ENCODE measurements at regions of chr1 and their contacts with region 1.

Region 1: GRCh38 chr1:202009326-202010179 is 834 bp upstream of the ELF3 start:
- DNase-seq: peak; percentile 84
- ATAC-seq: peak; percentile 71
- H3K4me3 ChIP-seq: peak overlapping the region; percentile 46 to 93 (median 55)
- H3K27ac ChIP-seq: peak overlapping the region; percentile 72
- H3K4me1 ChIP-seq: peaks cover 71% of the 10 kb centered on the region
- H3K27me3 ChIP-seq: no peaks in the 10 kb centered on the region; a peak in 1 of 5 replicates
- CTCF ChIP-seq: peak; percentile 92
- EP300 ChIP-seq: no peak
- POLR2A ChIP-seq: no peak
- RAD21 ChIP-seq: peak; percentile 92

Region 2: DNA sequence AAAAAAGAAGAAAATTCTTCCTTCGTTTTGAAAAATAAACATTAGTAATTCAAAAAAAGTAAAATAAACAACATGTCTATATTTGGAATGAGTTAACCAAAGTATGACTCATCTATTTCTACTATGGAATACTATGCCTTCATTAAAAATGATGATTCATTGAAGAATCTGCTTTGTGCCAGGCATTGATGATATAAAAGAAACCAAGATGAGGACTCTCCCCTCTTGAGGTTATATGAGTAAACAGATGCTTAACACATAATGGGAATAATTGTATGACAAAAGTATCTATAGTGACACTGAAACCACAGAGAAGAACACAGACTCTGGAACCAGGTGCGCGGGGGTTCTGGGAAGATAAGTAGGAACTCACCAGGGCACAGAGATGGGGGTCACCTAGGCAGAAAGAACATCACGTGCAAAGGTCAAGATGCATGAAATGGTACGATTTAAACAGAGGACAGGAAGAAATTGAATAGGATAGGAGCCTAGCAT is 19.7 kb after region 1 on chr1:
- CTCF ChIA-PET with region 1: no interaction called
- POLR2A ChIA-PET with region 1: interaction called, 92 read pairs
- in situ Hi-C with region 1: no loop called
- intact Hi-C with region 1: no loop called
- DNase-seq: no peak
- ATAC-seq: no peak
- H3K4me3 ChIP-seq: no peak overlapping the region
- H3K27ac ChIP-seq: no peak overlapping the region
- H3K4me1 ChIP-seq: peaks cover 42% of the 10 kb centered on the region
- H3K27me3 ChIP-seq: no peaks in the 10 kb centered on the region
- CTCF ChIP-seq: no peak
- EP300 ChIP-seq: no peak; a peak in 1 of 4 replicates
- POLR2A ChIP-seq: no peak
- RAD21 ChIP-seq: no peak

Region 3: DNA sequence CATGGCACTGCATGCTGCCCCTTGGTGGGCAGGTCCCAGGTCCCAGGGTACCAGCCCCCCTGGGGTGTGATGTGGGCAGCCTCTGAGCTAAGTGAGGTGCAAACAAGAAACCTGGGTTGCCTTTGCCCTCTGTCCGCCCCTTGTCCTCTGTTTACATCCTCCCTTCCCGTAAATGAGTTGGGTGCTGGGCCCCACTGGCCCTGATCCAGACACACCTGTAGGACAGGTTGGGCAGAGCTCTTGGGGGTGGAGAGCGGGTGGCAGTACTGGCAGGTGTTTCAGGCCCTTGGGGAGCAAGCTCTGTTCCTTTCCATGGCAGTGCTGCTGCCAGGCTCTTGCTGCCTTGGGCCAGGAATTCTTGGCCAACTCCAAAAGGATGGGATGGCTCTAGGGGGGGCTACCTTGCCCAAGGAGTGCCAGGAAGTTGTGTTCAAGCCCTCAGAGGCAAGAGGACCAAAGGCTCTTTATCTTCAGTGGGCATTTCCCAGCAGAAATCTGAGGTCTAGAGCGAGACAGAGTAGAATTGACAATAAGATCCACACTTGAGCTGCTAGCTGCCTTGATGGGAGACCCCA is 36.8 kb after region 1 on chr1:
- CTCF ChIA-PET with region 1: no interaction called
- POLR2A ChIA-PET with region 1: interaction called, 31 read pairs
- in situ Hi-C with region 1: no loop called
- intact Hi-C with region 1: loop called (anchors 1 kb)
- DNase-seq: no peak
- ATAC-seq: peak; percentile 11; the same call in 2 of the 3 replicates
- H3K4me3 ChIP-seq: peak overlapping the region in 1 of 3 experiments; percentile 49; a peak in 2 of 6 replicates
- H3K27ac ChIP-seq: no peak overlapping the region
- H3K4me1 ChIP-seq: peaks cover 80% of the 10 kb centered on the region
- H3K27me3 ChIP-seq: no peaks in the 10 kb centered on the region
- CTCF ChIP-seq: no peak
- EP300 ChIP-seq: peak in 1 of 2 experiments; percentile 68; a peak in 1 of 4 replicates
- POLR2A ChIP-seq: no peak
- RAD21 ChIP-seq: no peak

Region 4: GRCh38 chr1:202069662-202070061 is 60.1 kb after region 1 on chr1:
- CTCF ChIA-PET with region 1: no interaction called
- POLR2A ChIA-PET with region 1: interaction called, 24 read pairs
- in situ Hi-C with region 1: no loop called
- intact Hi-C with region 1: no loop called
- DNase-seq: peak; percentile 82
- ATAC-seq: peak; percentile 84
- H3K4me3 ChIP-seq: no peak overlapping the region
- H3K27ac ChIP-seq: no peak overlapping the region
- H3K4me1 ChIP-seq: peaks cover 35% of the 10 kb centered on the region
- H3K27me3 ChIP-seq: no peaks in the 10 kb centered on the region
- CTCF ChIP-seq: no peak
- EP300 ChIP-seq: peak in 1 of 2 experiments; percentile 13; a peak in 1 of 4 replicates
- POLR2A ChIP-seq: no peak
- RAD21 ChIP-seq: no peak

Region 5: DNA sequence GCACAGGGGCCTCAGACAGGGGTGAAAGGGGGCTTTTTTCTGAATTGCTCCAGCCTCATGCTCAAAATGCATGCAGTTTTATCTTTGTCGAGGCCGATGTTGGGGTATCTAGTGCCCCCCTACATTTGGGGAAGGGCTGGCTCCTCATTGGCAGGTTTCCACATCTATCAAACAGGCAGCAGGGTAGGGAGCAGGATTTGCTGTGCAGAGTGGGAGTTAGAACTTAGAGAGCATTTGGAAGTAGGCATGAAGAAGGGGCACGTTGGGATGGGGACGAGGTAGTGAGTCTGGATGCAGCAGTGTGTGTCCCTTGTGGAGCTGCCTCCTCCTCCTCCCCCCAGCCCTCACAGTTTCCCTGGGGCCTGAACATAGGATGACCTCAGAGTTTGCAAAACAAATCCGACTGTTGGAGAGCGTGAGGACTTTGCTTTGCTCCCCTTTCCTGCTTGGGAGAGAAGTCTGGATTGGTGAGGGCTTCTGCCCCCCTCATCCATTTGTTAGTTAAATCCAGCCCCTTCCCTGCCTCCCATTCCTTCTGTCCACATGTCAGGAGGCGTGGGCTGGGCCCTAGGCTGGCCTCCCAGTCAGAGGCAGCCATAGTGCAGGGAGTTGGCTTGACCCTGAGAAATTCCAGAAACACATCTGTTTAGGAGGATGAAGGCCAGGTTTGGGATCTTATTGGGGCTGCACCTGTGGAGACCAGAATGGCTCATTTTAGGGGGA is 76.3 kb after region 1 on chr1:
- CTCF ChIA-PET with region 1: interaction called, 20 read pairs
- POLR2A ChIA-PET with region 1: interaction called, 118 read pairs
- in situ Hi-C with region 1: no loop called
- intact Hi-C with region 1: loop called (anchors 1 kb)
- DNase-seq: peak; percentile 99
- ATAC-seq: peak; percentile 89
- H3K4me3 ChIP-seq: peak overlapping the region; percentile 49 to 68 (median 61)
- H3K27ac ChIP-seq: peak overlapping the region; percentile 96
- H3K4me1 ChIP-seq: peaks cover 83% of the 10 kb centered on the region
- H3K27me3 ChIP-seq: no peaks in the 10 kb centered on the region
- CTCF ChIP-seq: no peak; the same call in 1 of the 2 replicates
- EP300 ChIP-seq: peak; percentile 43 to 50; a peak in 3 of 4 replicates
- POLR2A ChIP-seq: peak; percentile 53 to 69
- RAD21 ChIP-seq: no peak

Region 6: DNA sequence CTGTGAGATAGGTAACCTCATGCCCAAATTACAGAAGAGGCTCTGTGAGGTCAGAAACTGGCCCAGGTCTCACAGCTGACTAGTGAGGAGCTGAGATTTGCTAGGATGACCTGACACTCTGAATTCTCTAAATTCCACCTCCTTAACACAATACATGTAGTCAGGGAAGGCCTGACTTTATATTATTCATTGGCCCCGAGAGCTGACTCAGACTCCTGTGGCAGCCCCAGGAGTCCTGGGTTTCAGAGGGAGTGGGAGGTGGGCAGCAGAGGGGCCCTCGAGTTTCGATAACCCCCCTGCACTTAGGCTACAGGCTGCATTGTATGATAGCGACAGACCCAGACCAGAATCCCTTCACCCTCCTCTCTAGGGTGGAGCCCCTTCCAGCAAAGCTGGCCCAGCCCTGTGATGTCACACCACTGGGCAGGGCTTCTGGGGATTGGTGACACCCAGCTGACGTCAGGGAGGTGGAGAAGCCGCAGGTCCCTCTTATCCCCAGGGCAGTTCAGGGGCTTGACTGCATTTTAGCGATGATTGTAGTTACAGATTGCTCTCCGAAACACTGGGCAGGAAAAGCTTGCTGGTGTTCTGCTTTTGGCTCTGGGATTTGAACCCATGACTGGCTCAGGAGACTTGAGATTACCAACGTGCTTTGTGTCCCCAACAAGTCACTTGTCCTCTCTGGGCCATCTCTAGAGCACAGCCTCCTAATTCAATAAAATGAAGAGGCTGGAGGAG is 96.2 kb after region 1 on chr1:
- CTCF ChIA-PET with region 1: no interaction called
- POLR2A ChIA-PET with region 1: interaction called, 22 read pairs
- in situ Hi-C with region 1: no loop called
- intact Hi-C with region 1: no loop called
- DNase-seq: no peak
- ATAC-seq: no peak; the same call in 2 of the 3 replicates
- H3K4me3 ChIP-seq: no peak overlapping the region
- H3K27ac ChIP-seq: no peak overlapping the region
- H3K4me1 ChIP-seq: peaks cover 51% of the 10 kb centered on the region
- H3K27me3 ChIP-seq: peaks cover 3 to 5% of the 10 kb centered on the region in 2 experiments; a peak in 2 of 5 replicates
- CTCF ChIP-seq: no peak
- EP300 ChIP-seq: no peak
- POLR2A ChIP-seq: no peak
- RAD21 ChIP-seq: no peak

Region 7: DNA sequence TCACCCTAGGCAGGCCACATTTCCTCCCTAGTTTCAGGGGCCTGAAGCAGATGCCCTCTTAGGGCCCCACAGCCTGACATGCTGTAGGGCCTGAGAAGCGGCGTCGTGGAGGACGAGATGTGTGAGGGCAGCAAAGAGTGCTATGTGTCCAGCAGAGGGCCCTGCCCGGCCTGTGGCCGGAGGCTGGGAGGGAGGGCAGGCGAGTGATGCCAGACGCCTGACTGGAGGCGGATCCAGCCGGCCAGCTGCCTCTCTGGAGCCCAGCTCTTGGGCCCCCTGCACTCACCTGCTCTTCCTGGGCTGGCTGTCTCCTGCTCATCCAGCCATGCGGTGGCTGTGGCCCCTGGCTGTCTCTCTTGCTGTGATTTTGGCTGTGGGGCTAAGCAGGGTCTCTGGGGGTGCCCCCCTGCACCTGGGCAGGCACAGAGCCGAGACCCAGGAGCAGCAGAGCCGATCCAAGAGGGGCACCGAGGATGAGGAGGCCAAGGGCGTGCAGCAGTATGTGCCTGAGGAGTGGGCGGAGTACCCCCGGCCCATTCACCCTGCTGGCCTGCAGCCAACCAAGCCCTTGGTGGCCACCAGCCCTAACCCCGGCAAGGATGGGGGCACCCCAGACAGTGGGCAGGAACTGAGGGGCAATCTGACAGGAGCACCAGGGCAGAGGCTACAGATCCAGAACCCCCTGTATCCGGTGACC is 113.2 kb after region 1 on chr1 and contains the start of gene GPR37L1:
- CTCF ChIA-PET with region 1: interaction called, 69 read pairs
- POLR2A ChIA-PET with region 1: interaction called, 30 read pairs
- in situ Hi-C with region 1: loop called (anchors 5 kb)
- intact Hi-C with region 1: loop called (anchors 1 kb)
- DNase-seq: peak; percentile 58
- ATAC-seq: peak; percentile 92
- H3K4me3 ChIP-seq: no peak within 1 kb of the TSS; a peak in 1 of 6 replicates
- H3K27ac ChIP-seq: no peak within 1 kb of the TSS
- H3K4me1 ChIP-seq: peaks cover 17% of the 10 kb centered on the region
- H3K27me3 ChIP-seq: peaks cover 4 to 40% of the 10 kb centered on the region in 2 experiments; a peak in 4 of 5 replicates
- CTCF ChIP-seq: peak; percentile 87
- EP300 ChIP-seq: no peak
- POLR2A ChIP-seq: no peak
- RAD21 ChIP-seq: peak; percentile 67
- total RNA-seq, gene GPR37L1: not detected in 2 replicates